Pancreas (tissue), 10 donors: ENCODE measurements at regions of chr19 and their contacts with region 1.

Region 1: DNA sequence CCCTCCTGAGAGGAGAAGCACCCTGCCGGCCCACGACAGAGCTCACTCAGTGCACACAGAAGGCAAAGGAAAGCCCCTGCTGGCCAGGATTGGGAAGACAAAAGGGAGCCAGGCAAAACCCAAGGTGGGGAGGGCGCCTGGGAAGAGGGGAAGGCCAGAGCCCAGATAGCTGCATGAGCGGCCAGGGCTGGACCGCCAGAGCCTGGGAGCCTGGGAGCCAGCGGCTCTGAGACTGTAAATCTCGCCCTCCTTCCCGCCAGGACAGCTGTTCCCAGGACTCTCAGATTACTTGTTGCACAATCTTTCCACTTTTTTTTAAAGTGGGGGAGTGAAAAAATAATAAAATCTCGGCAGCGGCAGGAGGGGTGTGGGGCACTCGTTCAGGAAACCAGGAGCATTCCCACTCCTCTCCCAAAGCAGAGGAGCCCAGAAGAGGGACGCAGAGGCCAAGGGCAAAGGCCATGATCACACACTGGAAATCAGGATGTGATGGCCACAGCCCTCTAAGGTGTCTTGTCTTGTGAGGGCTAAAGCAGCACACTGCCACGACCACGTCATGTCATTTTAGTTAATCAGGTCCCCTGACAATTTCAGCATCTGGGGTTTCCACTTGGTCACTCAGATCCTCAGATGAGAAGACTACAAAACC is 19.6 kb upstream of the EPHX3 start:
- DNase-seq: peak in 3 of 6 donors; percentile 53 to 60 (median 53)
- ATAC-seq: peak; percentile 38 to 59 (median 52)
- H3K4me3 ChIP-seq: no peak overlapping the region
- H3K27ac ChIP-seq: peak overlapping the region in 3 of 4 donors; percentile 36 to 73 (median 52)
- H3K4me1 ChIP-seq: peaks cover 0 to 13% (median 4%) of the 10 kb centered on the region in 3 donors
- H3K27me3 ChIP-seq: no peaks in the 10 kb centered on the region
- CTCF ChIP-seq: peak in 2 of 4 donors; percentile 9 to 17

Region 2: GRCh38 chr19:15185188-15185587 is 66.7 kb before region 1 on chr19:
- intact Hi-C with region 1: no loop called
- DNase-seq: no peak
- ATAC-seq: no peak
- H3K4me3 ChIP-seq: no peak overlapping the region
- H3K27ac ChIP-seq: no peak overlapping the region
- H3K4me1 ChIP-seq: no peaks in the 10 kb centered on the region
- H3K27me3 ChIP-seq: no peaks in the 10 kb centered on the region
- CTCF ChIP-seq: no peak

Region 3: GRCh38 chr19:15555759-15556633 is 304.1 kb after region 1 on chr19:
- intact Hi-C with region 1: loop called in 1 of 3 experiments (anchors 10 kb)
- DNase-seq: peak; percentile 69 to 91 (median 82)
- ATAC-seq: peak; percentile 91 to 97 (median 94)
- H3K4me3 ChIP-seq: peak overlapping the region in 1 of 4 donors; percentile 23
- H3K27ac ChIP-seq: peak overlapping the region in 1 of 4 donors; percentile 31
- H3K4me1 ChIP-seq: peaks cover 0 to 8% (median 5%) of the 10 kb centered on the region in 3 donors
- H3K27me3 ChIP-seq: no peaks in the 10 kb centered on the region
- CTCF ChIP-seq: peak; percentile 35 to 66 (median 52)